Activated CD4-positive, alpha-beta T cell treated with anti-CD3 and anti-CD28 coated beads, Interleukin-2, amount 10 ng/mL, durations not matched to agents 24 days and 14 days (primary cell): ENCODE measurements at regions of chr4 and their contacts with region 1.

Region 1: DNA sequence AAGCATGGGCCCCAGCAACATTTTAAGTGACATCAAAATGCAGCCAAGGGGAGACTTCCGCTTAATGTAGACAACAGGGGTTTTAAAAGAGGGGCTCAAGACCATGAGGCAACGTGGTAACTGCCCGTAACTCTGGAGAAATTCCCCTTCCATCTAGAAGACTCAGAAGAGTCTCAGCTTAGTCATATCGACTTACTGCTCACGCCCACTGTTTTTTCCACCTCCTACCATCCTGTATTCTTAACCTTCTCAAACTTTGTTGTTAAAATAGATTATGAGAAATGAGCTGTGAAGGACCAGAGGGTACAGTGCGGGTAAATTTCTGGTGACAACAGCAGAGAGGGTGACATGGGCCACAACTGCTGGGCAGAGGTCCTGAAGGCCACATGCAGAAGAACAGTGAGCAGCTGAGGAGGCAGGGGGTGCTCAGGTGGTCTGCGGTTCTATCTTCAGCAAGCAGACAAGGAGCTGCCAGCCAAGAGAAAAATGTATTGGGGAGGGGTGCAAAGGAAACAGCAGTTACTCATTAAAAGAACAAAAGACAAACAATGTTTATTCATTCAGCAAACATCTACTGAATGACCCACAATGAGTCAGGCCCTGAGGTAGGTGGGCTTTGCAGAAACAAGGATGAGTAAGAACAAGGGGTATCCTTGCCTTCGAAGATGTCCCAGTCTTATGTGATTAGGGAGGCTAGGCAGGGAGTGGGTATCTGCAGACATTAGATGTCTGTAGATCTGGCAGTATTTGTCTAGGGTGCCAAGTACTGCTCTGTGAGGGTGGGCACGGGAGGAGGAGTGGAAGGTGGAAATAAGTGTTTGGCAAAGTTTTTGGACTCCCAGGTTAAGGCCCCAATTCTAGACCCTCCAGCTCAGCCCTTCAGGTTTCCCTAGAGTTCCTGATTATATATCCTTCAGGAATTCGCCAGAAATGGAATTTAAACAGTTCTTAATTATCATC is 175.3 kb downstream of the TSPAN5 start:
- DNase-seq: peak; percentile 75
- H3K4me3 Mint-ChIP-seq: peak overlapping the region; percentile 80
- H3K27ac Mint-ChIP-seq: peak overlapping the region; percentile 99
- H3K4me1 Mint-ChIP-seq: peaks cover 79% of the 10 kb centered on the region
- H3K27me3 Mint-ChIP-seq: no peaks in the 10 kb centered on the region

Region 2: DNA sequence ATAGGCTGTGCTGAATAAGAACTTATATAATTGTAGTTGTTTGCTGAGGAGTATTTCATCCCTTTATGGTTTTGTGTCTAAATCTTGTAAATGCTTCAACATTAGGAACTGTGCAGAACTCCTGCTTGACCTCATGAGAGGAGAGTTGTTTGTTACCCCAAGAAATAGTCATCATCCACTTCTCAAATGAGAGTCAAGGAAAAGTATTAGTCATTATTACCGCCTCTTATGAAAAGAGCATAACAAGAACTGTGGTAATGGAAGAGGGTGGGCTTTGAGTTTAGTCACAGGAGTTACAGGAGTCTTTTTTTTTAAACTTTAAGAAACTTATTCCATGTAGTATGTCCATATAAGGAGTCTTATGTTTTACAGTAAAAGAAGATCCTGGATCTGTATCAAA is 89.0 kb before region 1 on chr4:
- intact Hi-C with region 1: no loop called
- DNase-seq: no peak
- H3K4me3 Mint-ChIP-seq: no peak overlapping the region
- H3K27ac Mint-ChIP-seq: no peak overlapping the region
- H3K4me1 Mint-ChIP-seq: peaks cover 1% of the 10 kb centered on the region
- H3K27me3 Mint-ChIP-seq: no peaks in the 10 kb centered on the region

Region 3: DNA sequence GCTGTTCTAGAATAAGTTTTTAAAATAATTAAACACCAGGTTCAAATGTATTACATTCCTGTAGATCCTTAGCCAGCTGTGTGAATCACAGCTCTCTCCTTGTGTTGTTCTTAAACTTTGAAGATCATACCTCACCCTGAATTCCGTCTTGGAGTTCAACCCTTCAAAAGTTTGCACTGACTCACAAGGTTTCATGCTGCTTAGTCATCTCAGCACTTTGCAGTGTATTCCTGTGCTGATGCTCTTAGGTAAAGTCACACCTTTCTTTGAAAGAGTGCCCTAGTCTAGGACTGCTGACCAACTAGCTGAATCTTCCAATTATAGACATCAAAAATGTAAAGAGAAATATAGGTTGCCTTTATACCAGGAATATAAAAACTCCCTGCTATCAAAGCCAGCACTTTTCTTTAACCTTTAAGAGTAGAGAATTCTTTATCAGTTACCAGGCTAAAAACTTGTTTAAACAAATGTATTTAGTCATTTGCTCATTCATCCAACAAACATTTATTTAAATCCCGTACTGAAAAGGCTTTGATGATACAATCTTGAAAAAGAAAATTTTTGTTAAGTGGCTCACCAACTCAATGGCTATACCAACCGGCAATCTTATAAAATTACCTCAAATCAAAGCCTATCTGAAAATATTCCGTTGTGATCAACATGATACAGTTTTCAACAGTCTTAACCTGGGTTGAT is 52.3 kb before region 1 on chr4:
- intact Hi-C with region 1: no loop called
- DNase-seq: no peak
- H3K4me3 Mint-ChIP-seq: no peak overlapping the region
- H3K27ac Mint-ChIP-seq: no peak overlapping the region
- H3K4me1 Mint-ChIP-seq: peaks cover 14% of the 10 kb centered on the region
- H3K27me3 Mint-ChIP-seq: no peaks in the 10 kb centered on the region

Region 4: GRCh38 chr4:98493296-98493695 is 10.2 kb after region 1 on chr4:
- intact Hi-C with region 1: loop called (anchors 1 kb)
- DNase-seq: no peak
- H3K4me3 Mint-ChIP-seq: peak overlapping the region; percentile 32
- H3K27ac Mint-ChIP-seq: peak overlapping the region; percentile 84
- H3K4me1 Mint-ChIP-seq: peaks cover 31% of the 10 kb centered on the region
- H3K27me3 Mint-ChIP-seq: no peaks in the 10 kb centered on the region

Region 5: GRCh38 chr4:98528882-98529281 is 45.8 kb after region 1 on chr4:
- intact Hi-C with region 1: loop called (anchors 1 kb)
- DNase-seq: no peak
- H3K4me3 Mint-ChIP-seq: no peak overlapping the region
- H3K27ac Mint-ChIP-seq: peak overlapping the region; percentile 82
- H3K4me1 Mint-ChIP-seq: peaks cover 29% of the 10 kb centered on the region
- H3K27me3 Mint-ChIP-seq: no peaks in the 10 kb centered on the region

Region 6: DNA sequence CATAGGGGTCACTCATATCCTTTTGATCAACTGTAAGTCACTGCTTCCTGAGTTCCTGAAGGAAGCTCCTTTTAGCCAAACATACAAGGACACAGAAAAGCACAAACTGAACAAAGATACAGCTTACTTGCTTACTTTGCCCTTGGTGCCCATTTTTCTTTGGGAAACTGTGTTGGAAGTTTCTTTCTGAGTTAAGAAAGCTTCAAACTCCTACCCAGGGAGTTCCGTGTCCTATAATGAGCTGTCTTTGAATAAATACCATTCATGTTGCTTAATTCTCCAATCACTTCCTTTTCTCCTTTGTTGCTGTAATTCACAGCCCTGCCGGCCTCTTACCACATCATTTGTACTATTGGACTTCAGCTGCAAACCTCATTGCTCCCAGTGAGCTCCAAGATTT is 660.9 kb after region 1 on chr4 and contains the start of gene ADH4:
- intact Hi-C with region 1: no loop called
- DNase-seq: no peak
- H3K4me3 Mint-ChIP-seq: no peak within 1 kb of the TSS
- H3K27ac Mint-ChIP-seq: no peak within 1 kb of the TSS
- H3K4me1 Mint-ChIP-seq: no peaks in the 10 kb centered on the region
- H3K27me3 Mint-ChIP-seq: peaks cover 2% of the 10 kb centered on the region
- total RNA-seq, gene ADH4: not detected in 2 replicates

Region 7: DNA sequence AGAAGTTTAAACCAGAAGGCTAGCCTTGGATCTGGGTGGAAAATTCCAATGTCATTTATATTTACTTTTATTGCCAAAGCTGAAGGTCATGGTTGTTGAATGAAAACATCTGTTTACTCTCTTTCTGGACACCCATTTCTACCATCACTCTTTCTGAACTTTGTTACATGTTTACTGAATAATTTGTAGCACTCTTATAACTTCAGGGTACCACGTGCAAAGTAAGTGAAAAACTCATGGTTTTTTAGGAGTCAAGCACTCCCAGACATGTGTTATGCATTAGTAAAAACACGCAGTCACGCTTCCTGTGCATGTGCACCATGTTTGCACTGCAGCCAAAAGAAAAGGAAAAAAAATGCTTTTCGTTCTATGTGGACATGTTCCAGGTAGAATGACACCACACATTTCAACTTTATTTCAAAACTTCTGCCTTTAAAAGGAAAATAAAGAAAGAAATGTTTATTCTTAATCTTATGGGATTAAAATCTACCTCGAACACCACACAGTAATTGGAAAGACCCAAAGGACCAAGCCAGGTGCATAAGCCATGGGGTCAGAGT is 900.8 kb after region 1 on chr4:
- intact Hi-C with region 1: no loop called
- DNase-seq: no peak
- H3K4me3 Mint-ChIP-seq: no peak overlapping the region
- H3K27ac Mint-ChIP-seq: no peak overlapping the region
- H3K4me1 Mint-ChIP-seq: no peaks in the 10 kb centered on the region
- H3K27me3 Mint-ChIP-seq: peaks cover 10% of the 10 kb centered on the region